HCT116 (cell line): ENCODE measurements at regions of chr17 and their contacts with region 1.

Region 1: DNA sequence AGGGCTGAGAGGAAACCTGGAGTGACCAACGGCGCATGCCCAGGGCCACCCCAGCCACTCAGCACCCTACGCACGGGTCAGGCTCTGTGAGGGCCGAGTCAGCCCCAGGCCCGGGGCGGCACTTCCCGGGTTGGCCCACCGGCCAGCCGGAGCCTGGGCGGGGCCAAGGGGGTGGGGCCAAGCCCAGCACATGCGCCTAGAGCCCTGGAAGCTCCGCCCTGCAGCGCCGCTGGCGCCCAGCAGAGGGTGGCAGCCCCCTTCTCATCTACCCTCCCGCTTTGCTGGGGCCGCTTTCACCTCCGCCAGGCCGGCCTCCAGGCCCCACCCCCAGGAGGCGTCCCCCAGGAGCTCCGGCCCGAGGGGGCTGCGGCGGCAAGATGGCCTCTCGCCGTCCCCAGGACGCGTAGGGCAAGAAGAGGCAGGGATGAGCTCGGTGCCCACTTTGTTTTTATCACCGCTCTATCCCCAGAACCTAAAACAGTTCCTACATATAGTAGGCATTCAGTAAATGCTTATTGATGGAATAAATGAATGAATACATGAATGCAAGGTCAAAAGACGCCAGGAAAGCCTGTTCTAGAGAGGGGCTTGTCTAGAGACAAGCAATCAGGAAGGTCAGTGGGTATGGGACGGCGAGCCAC is 31.3 kb downstream of the MYO18A start:
- DNase-seq: peak; percentile 85
- ATAC-seq: peak; percentile 83
- H3K4me3 ChIP-seq: peak overlapping the region; percentile 34 to 53
- H3K27ac ChIP-seq: peak overlapping the region; percentile 81
- H3K4me1 ChIP-seq: peaks cover 74 to 93% of the 10 kb centered on the region in 2 experiments
- H3K27me3 ChIP-seq: no peaks in the 10 kb centered on the region
- CTCF ChIP-seq: peak; percentile 77 to 96 (median 92)
- POLR2A ChIP-seq: peak; percentile 63
- RAD21 ChIP-seq: peak; percentile 97

Region 2: DNA sequence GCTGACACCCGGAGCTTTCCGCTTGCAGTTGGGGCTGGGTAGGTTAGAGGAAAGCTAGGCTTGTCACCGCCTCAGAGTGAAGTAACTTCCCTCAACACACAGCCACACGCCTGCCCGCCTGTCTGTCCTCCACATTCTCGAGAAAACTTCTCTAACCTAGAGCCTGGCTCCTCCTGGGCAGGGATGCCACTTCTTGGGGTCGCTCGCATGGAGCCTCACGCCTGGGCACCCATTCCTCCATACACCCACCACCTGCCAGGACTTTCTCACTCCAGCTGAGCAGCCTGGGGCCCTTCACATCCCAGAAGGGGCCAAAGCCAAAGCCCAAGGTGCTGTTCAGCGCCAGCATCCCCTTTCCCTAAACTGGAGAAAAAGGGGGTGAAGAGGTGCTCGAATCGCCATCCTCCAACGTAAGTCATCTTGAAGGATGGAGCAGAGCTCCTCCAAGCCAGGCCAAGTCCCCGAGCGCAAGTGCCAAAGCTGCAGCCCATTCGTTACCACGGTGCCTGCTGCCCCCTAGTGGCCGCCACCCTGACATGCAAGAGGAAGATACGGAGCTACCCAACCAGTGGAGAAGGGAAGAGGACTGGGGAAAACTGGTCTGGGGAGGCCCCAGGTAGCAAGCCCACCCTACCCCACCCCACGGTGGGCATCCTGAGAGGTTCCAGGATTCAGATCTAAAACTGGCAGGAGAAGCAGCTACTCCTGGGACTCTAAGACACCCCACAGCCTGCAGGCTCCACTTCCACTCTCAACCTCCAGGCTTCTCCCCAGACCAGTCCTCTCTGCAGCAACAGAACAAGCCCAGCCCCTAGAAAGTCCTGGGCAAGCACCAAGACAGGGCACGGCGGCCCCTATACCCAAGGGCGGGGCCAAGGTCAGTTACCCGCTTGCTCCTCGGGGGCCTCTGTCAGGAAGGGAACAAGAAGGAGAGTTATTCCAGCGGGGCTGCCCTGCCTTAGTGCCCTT is 31.8 kb before region 1 on chr17:
- CTCF ChIA-PET with region 1: interaction called, 45 read pairs
- POLR2A ChIA-PET with region 1: no interaction called
- RAD21 ChIA-PET with region 1: no interaction called
- intact Hi-C with region 1: no loop called
- DNase-seq: no peak
- ATAC-seq: peak; percentile 77
- H3K4me3 ChIP-seq: no peak overlapping the region
- H3K27ac ChIP-seq: no peak overlapping the region
- H3K4me1 ChIP-seq: 0 out of 4 replicates have a peak, but pooled peaks cover 0 to 3% of the 10 kb centered on the region in 2 experiments
- H3K27me3 ChIP-seq: no peaks in the 10 kb centered on the region
- CTCF ChIP-seq: peak; percentile 65 to 94 (median 90); a peak in 5 of 6 replicates
- POLR2A ChIP-seq: no peak
- RAD21 ChIP-seq: peak; percentile 77

Region 3: DNA sequence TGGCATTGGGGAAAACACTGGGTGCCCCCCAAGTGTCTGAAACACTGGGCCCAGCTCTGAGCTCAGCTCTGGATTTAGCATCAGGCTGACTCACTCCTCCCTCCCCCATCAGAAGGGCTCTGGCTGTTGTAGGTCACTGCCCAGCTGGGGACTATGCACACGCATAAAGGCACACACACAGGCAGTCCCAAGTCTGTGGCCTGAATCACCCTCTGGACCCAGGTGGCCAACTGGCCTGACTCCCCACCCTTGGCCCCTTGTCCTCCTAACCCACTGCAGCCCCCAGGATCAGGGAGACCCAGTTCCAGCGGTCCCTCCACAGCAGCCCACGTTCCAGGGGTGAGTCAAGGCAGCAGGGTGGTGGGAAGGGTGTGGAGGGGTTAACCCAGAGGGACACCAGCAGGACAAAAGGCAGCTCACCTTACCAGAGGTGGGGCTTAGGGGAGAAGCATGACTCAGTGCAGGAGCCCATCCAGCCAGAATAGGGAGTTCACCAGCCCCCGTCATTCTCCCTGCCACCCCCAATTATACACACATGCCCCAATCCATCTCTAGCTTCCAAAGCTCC is 15.7 kb before region 1 on chr17:
- CTCF ChIA-PET with region 1: interaction called, 19 read pairs
- POLR2A ChIA-PET with region 1: interaction called, 4 read pairs
- RAD21 ChIA-PET with region 1: interaction called in 1 of 2 experiments, 4 read pairs
- intact Hi-C with region 1: no loop called
- DNase-seq: no peak
- ATAC-seq: peak; percentile 92
- H3K4me3 ChIP-seq: peak overlapping the region; percentile 24 to 47
- H3K27ac ChIP-seq: peak overlapping the region; percentile 56
- H3K4me1 ChIP-seq: peaks cover 31 to 62% of the 10 kb centered on the region in 2 experiments
- H3K27me3 ChIP-seq: no peaks in the 10 kb centered on the region
- CTCF ChIP-seq: no peak
- POLR2A ChIP-seq: no peak
- RAD21 ChIP-seq: no peak

Region 4: GRCh38 chr17:29219378-29220047 is 70.6 kb after region 1 on chr17:
- CTCF ChIA-PET with region 1: interaction called, 127 read pairs
- POLR2A ChIA-PET with region 1: interaction called, 3 read pairs
- RAD21 ChIA-PET with region 1: interaction called, 3 to 6 read pairs
- intact Hi-C with region 1: loop called (anchors 1 kb)
- DNase-seq: peak; percentile 63
- ATAC-seq: peak; percentile 98
- H3K4me3 ChIP-seq: no peak overlapping the region
- H3K27ac ChIP-seq: 0 out of 2 replicates have a peak overlapping the region, but pooled peaks have one; percentile 3
- H3K4me1 ChIP-seq: peaks cover 0 to 9% of the 10 kb centered on the region in 2 experiments; a peak in 1 of 4 replicates
- H3K27me3 ChIP-seq: no peaks in the 10 kb centered on the region
- CTCF ChIP-seq: peak; percentile 93 to 98 (median 97)
- POLR2A ChIP-seq: no peak
- RAD21 ChIP-seq: peak; percentile 90

Region 5: DNA sequence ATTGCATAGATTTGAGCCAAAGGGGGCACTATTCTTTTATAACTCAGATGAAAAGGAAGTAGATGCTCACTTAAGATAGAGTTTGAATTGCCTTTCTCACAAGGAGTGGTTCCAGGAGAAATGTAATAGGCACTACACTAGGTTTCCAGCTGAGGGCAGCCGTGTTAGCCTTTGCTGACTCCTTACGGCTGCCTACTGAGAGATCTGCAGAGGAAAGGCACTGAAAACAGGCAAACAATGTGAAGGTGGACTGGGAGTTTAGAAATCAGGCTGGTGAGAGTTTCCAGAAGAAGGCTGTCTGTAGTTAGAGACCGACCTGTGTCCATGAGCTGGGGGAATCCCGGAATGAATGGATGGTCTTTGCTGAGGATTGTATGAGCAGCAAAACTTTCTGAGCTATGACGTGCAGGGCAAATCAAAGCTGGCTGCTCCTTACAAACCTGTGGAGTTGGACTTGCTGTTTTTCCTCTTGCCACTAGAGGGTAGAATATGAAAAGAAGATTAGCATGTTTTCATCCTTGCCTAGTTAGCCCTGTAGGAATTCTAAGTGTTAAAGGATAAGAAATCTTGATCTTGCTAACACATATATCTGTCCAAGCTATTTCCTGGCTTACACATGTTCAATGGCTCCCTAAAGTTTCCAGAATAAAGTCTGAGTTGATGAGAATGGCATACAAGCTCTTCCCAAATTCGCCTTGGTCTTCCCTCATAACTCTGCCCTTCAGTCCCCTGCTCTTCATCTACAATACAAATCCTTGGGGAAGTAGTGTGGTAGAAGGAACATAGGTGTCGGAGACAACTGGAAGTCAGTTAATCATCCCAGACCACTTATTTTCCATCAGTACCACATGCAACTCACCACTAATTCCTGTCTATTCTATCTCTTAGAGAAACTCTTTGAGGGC is 221.2 kb after region 1 on chr17:
- CTCF ChIA-PET with region 1: interaction called, 9 read pairs
- POLR2A ChIA-PET with region 1: interaction called, 3 read pairs
- RAD21 ChIA-PET with region 1: no interaction called
- intact Hi-C with region 1: loop called (anchors 10 kb)
- DNase-seq: peak; percentile 66
- ATAC-seq: peak; percentile 94
- H3K4me3 ChIP-seq: peak overlapping the region; percentile 0 to 27; a peak in 3 of 4 replicates
- H3K27ac ChIP-seq: peak overlapping the region; percentile 11
- H3K4me1 ChIP-seq: peaks cover 2 to 18% of the 10 kb centered on the region in 2 experiments; a peak in 3 of 4 replicates
- H3K27me3 ChIP-seq: no peaks in the 10 kb centered on the region
- CTCF ChIP-seq: peak; percentile 62 to 88 (median 68)
- POLR2A ChIP-seq: no peak
- RAD21 ChIP-seq: peak; percentile 74